H1 (cell line): ENCODE measurements at regions of chr9 and their contacts with region 1.

Region 1: DNA sequence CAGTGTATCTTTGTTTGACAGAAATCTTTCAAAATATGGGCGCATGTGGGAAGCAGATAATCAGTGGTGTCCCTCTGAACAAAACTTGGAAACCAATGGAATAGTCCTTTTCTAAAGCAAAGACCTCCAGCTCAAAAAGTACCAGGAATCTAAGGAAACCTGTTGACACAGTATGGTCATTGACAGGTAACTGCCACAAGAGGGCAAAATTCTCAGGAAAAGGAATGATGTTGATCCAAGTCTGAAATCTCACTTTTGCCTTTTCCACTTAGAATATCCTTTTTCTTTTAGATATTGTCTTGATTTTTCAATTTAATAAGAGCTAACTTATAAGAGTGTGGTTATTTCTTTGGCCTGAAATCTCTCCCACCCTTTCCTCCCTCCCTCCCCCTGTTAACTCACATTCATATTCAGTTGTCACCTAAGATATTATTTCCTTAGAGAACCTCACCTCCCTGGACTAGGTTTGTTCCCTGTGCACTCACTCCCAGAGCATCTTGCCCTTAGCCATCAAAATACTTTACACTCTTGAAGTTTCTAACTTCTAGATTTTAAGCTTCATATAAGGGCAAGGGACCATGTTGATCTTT is 59.0 kb upstream of the BARX1 start:
- DNase-seq: no peak
- H3K4me3 ChIP-seq: no peak overlapping the region
- H3K27ac ChIP-seq: no peak overlapping the region
- H3K4me1 ChIP-seq: no peaks in the 10 kb centered on the region
- H3K27me3 ChIP-seq: no peaks in the 10 kb centered on the region
- CTCF ChIP-seq: peak in 2 of 3 experiments; percentile 61 to 75; a peak in 2 of 4 replicates
- EP300 ChIP-seq: no peak
- POLR2A ChIP-seq: no peak
- RAD21 ChIP-seq: peak; percentile 57 to 65

Region 2: DNA sequence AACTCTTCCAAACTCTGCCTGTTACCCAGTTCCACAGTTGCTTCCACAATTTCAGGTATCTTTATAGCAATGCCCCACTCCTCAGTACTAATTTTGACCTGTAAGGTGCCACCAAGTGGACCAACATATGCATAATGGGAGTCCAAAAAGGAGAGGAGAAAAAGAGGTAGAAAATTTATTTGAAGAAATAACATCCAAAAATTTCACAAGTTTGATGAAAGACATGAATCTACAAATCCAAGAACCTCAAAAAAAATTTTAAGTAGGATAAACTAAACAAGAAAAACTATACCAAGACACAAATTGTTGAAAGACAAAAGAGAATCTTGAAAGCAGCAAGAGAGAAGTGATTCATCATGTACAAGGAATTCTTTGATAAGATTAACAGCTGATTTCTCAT is 138.8 kb before region 1 on chr9:
- CTCF ChIA-PET with region 1: no interaction called
- POLR2A ChIA-PET with region 1: no interaction called
- DNase-seq: no peak
- H3K4me3 ChIP-seq: no peak overlapping the region
- H3K27ac ChIP-seq: no peak overlapping the region
- H3K4me1 ChIP-seq: no peaks in the 10 kb centered on the region
- H3K27me3 ChIP-seq: no peaks in the 10 kb centered on the region
- CTCF ChIP-seq: no peak
- EP300 ChIP-seq: no peak
- POLR2A ChIP-seq: no peak
- RAD21 ChIP-seq: no peak

Region 3: DNA sequence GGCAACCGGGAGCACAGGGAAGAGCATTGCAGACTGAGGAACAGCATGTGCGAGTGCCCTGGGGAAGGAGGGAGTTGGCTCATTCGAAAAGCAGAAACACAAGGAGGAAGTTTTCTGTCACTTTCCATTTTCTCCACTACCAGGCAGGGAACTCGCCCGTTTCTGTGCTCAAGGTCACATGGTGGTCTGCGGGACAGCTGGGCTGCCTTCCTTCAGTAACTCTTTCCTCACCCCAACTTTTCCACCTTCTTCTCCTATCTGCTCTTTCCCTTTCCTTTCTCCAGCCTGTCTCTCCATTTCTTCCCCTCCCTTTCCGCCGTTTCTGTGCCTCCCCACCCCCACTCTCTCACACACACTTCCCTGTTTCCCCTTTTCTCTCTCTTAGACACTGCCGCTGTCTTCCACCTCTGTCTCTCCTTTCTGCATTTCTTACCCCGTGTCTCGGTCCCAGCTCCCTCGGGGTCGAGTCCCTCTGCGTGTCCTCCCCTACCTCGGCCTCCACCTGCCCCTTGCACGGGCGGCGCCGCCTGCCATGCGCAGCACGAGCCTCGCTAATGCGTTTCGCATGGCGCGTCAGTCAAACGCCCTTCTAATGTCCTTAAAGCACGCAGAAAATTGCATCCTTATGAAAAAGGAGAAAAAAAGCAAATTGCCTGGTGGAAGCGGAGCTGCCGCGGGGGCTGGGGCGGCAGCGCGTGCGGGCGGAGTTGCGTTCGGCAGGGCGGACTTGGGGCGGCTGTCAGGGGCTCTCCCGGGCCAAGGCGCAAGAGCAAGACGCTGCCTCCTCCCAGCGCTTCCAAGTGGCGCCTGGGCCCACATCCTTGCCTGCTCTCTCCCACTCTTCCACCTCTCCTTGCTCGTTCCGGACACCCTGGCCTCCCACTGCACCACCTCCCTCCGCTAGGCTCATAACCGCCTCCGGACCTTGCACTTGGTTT is 68.5 kb before region 1 on chr9:
- CTCF ChIA-PET with region 1: no interaction called
- POLR2A ChIA-PET with region 1: no interaction called
- DNase-seq: no peak
- H3K4me3 ChIP-seq: peak overlapping the region; percentile 9 to 60 (median 33); a peak in 7 of 8 replicates
- H3K27ac ChIP-seq: no peak overlapping the region
- H3K4me1 ChIP-seq: peaks cover 4 to 50% (median 17%) of the 10 kb centered on the region in 4 experiments
- H3K27me3 ChIP-seq: peaks cover 77 to 99% (median 95%) of the 10 kb centered on the region in 4 experiments
- CTCF ChIP-seq: no peak
- EP300 ChIP-seq: no peak
- POLR2A ChIP-seq: no peak
- RAD21 ChIP-seq: no peak

Region 4: GRCh38 chr9:94002316-94003140 is 11.6 kb before region 1 on chr9:
- CTCF ChIA-PET with region 1: interaction called, 66 read pairs
- POLR2A ChIA-PET with region 1: no interaction called
- DNase-seq: peak in 1 of 2 experiments; percentile 75
- H3K4me3 ChIP-seq: no peak overlapping the region
- H3K27ac ChIP-seq: no peak overlapping the region
- H3K4me1 ChIP-seq: peaks cover 0 to 2% (median under 1%) of the 10 kb centered on the region in 4 experiments; a peak in 2 of 7 replicates
- H3K27me3 ChIP-seq: no peaks in the 10 kb centered on the region
- CTCF ChIP-seq: peak in 2 of 3 experiments; percentile 87 to 89; a peak in 3 of 4 replicates
- EP300 ChIP-seq: no peak
- POLR2A ChIP-seq: no peak
- RAD21 ChIP-seq: peak; percentile 81 to 87

Region 5: GRCh38 chr9:94042516-94043360 is 28.6 kb after region 1 on chr9:
- CTCF ChIA-PET with region 1: interaction called, 13 read pairs
- POLR2A ChIA-PET with region 1: no interaction called
- DNase-seq: no peak
- H3K4me3 ChIP-seq: 0 out of 8 replicates have a peak overlapping the region, but pooled peaks of 1 of the 4 experiments have one; percentile 5
- H3K27ac ChIP-seq: no peak overlapping the region
- H3K4me1 ChIP-seq: peaks cover 0 to 4% (median 2%) of the 10 kb centered on the region in 4 experiments; a peak in 2 of 7 replicates
- H3K27me3 ChIP-seq: no peaks in the 10 kb centered on the region
- CTCF ChIP-seq: no peak
- EP300 ChIP-seq: no peak
- POLR2A ChIP-seq: no peak
- RAD21 ChIP-seq: no peak

Region 6: GRCh38 chr9:94150279-94150828 is 136.2 kb after region 1 on chr9:
- CTCF ChIA-PET with region 1: interaction called, 10 read pairs
- POLR2A ChIA-PET with region 1: no interaction called
- DNase-seq: no peak
- H3K4me3 ChIP-seq: no peak overlapping the region
- H3K27ac ChIP-seq: no peak overlapping the region
- H3K4me1 ChIP-seq: peaks cover 10 to 17% (median 13%) of the 10 kb centered on the region in 4 experiments
- H3K27me3 ChIP-seq: no peaks in the 10 kb centered on the region; a peak in 1 of 7 replicates
- CTCF ChIP-seq: no peak
- EP300 ChIP-seq: no peak
- POLR2A ChIP-seq: no peak
- RAD21 ChIP-seq: no peak

Region 7: DNA sequence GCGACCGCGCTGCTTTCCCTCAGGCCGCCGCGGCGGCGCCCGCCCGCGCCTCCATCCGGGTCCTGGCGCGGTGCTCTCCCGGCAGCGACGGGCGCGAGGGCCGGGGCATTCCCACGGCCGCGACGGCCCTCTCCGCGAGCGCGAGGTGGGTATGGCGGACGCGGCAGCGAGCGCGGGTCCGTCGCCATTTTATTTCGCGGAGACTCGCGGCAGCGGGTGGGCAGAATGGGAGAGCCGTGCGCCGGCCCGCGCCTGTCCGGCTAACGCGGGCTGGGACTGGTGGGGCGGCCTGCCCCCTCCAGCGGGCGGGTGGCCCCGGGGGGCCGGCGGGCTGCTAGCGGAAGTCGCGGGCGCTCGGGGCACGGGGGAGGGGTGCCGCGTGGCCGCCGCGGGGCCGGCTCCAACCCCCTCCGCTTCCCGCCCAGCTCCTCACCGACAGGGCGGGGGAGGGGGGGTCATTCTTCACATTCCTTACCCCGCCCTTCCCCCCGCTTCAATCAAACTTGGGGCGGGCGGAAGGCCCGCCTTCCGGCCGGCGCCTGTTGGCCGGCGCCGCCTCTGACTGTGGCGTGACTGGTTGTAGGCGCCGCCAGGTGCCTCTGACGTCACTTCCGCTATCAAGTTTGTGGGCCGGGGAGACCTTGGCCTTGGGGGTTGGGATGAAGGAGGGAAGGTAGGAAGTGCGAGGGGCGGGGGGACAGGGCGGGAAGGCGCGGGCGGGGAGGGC is 152.2 kb after region 1 on chr9:
- CTCF ChIA-PET with region 1: interaction called, 25 read pairs
- POLR2A ChIA-PET with region 1: interaction called, 4 read pairs
- DNase-seq: peak; percentile 93 to 97
- H3K4me3 ChIP-seq: peak overlapping the region; percentile 76 to 89 (median 84)
- H3K27ac ChIP-seq: peak overlapping the region; percentile 99
- H3K4me1 ChIP-seq: no peaks in the 10 kb centered on the region
- H3K27me3 ChIP-seq: no peaks in the 10 kb centered on the region
- CTCF ChIP-seq: no peak
- EP300 ChIP-seq: peak in 1 of 2 experiments; percentile 81; a peak in 1 of 3 replicates
- POLR2A ChIP-seq: peak; percentile 24 to 96
- RAD21 ChIP-seq: no peak; a peak in 1 of 4 replicates

Region 8: DNA sequence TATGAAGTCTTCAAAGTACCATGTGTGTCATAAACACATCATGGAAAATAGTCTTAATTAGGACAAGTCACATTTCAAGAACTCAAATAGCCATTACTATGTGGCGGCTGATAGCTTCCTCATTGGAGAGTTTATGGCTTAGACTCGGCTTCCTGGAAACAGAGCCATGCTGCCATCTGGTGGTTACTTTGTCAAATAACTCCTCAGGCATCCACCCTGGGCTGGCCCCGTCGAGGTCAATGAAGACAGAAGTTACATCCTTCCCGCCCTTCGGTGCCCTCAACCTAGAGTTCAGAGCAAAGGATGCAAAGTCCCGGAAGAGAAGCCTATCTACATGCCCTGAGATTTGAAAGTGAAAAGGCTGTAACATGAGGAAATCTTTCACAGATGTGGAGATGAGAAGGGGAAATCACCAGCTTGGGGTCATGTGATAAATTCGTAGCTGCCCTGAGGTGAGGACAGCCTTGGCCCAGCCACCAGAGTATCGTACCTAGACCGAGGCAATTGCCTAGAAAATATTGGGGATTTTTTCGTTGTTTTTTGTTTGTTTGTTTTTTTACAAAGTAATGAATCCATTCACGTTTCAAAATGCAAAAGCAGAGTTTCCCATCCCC is 199.5 kb after region 1 on chr9:
- CTCF ChIA-PET with region 1: interaction called, 156 read pairs
- POLR2A ChIA-PET with region 1: interaction called, 3 read pairs
- DNase-seq: peak; percentile 60 to 83
- H3K4me3 ChIP-seq: no peak overlapping the region
- H3K27ac ChIP-seq: no peak overlapping the region
- H3K4me1 ChIP-seq: peaks cover 0 to 10% (median 4%) of the 10 kb centered on the region in 4 experiments; a peak in 5 of 7 replicates
- H3K27me3 ChIP-seq: no peaks in the 10 kb centered on the region
- CTCF ChIP-seq: peak; percentile 39 to 88 (median 83)
- EP300 ChIP-seq: no peak
- POLR2A ChIP-seq: no peak
- RAD21 ChIP-seq: peak; percentile 96 to 97